Activated T-helper 1 cell treated with anti-CD3 and anti-CD28 coated beads, Interleukin-12 subunit alpha, Interleukin-12 subunit beta, Interleukin-2, Interleukin-4 antibody, amounts not matched to agents 30 ng/mL and 10 ng/mL and 1 ng/mL, durations not matched to agents 14 hours and 24 hours and 36 hours (primary cell): ENCODE measurements at regions of chr3 and their contacts with region 1.

Region 1: DNA sequence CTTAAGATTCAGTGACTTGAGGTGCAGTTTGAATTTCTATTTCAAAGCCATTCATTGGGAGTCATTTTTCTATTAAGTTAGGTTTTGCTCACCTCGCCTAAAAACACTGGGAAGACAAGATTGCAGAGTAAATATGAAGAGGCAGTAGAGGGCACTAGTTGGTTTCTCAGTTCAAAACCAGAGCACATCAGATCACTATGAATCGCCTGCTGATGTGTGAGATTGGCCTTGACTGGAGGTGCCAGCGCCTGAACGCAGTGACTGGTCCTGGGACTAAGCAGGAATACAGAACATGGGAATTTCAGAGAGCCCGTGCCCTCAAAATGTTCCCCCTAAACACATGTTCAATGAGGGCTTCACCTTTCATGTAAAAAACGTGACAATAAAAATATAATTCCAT is 229.0 kb downstream of the ITPR1 start:
- DNase-seq: no peak
- H3K4me3 Mint-ChIP-seq: no peak overlapping the region
- H3K27ac Mint-ChIP-seq: peak overlapping the region; percentile 90
- H3K4me1 Mint-ChIP-seq: peaks cover 78% of the 10 kb centered on the region
- H3K27me3 Mint-ChIP-seq: no peaks in the 10 kb centered on the region

Region 2: DNA sequence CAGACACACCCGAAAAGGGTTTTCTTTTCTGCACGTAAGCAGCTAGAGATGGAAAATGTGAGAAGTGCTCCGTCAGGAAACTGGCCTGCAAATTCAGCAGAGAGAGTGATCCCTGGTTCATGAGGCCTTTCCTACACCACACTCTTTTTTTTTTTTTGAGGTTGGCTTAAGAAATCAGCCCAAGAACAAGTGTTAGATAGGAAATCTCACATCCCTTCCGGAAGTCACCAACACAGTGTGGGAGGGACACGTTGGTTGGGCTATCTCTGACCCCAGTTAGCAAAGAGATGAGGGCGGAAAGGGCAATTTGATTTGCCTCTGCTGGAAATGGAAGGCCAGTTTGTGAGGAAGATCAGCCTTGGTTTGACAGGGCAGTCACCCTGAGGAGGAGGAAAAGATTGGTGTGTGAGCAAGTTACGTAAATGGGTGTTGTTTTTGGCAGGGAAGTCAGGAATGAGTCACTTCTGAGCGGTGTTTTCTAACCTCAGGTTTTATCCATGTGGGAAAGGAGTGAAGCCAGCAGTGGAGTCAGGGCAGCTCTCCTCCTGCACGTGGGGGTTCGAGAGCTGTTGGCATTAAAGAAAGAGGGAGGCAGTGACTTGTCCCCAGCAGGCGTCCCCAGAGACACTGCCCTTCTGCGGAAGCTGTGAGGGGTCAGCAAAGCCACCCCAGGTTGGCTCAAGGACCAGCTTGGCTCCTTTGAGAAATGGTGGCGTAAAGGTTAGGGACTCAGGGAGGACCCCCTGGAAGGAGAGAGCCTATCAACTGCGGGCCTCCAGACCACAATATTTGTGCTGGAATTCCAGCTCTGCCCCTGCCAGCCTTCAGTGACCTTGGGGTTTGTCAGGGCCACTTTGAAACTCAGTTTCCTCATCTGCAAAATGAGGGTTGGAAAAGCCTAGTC is 19.6 kb after region 1 on chr3:
- intact Hi-C with region 1: loop called (anchors 2 kb)
- DNase-seq: no peak
- H3K4me3 Mint-ChIP-seq: peak overlapping the region; percentile 74
- H3K27ac Mint-ChIP-seq: peak overlapping the region; percentile 89
- H3K4me1 Mint-ChIP-seq: peaks cover 79% of the 10 kb centered on the region
- H3K27me3 Mint-ChIP-seq: no peaks in the 10 kb centered on the region

Region 3: DNA sequence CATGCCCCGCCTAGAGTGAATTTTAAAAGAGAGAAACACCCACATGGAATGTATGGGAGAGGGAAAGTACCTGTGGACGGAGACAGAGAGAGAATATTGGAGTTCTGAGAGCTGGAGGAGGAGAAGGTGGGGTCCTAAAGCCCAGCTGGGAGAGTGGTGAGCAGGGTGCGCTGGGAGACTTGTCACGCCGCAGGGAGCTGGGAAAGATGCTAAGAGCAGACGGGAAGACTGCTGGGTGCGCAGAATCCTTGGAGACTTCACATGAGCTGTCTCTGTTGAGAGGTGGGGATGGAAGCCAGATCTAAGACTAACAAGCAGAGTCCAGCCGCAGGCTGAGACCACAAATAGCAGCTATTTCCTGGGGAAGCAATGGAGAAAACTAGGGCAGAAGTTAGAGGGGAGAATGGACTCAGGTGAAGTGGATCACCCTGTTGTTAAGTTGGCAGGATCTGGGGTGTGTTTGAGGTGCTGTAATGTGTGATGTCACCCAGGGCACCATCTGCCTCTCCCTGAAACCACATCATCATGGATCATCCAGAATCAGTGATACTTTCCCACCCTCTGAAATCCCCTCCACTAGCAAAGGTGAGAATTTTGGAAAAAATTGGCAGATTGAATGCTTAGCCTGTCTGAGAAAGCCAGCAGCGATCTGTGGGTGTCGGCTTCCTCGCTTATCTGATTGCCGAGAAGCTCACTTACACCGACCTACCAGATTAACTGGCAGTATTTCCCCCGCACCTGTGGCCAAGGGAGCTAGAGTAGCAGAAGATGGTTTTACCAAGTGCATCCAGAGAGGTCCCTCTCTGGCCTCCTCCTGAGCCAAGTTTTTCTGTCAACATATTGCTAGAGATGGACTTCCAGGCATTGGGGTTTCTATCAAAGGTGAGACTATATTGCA is 82.3 kb after region 1 on chr3:
- intact Hi-C with region 1: loop called (anchors 1 kb)
- DNase-seq: no peak
- H3K4me3 Mint-ChIP-seq: no peak overlapping the region
- H3K27ac Mint-ChIP-seq: peak overlapping the region; percentile 76
- H3K4me1 Mint-ChIP-seq: peaks cover 59% of the 10 kb centered on the region
- H3K27me3 Mint-ChIP-seq: no peaks in the 10 kb centered on the region

Region 4: GRCh38 chr3:4821975-4822374 is 99.9 kb after region 1 on chr3:
- intact Hi-C with region 1: loop called (anchors 2 kb)
- DNase-seq: peak; percentile 82
- H3K4me3 Mint-ChIP-seq: peak overlapping the region; percentile 86
- H3K27ac Mint-ChIP-seq: peak overlapping the region; percentile 100
- H3K4me1 Mint-ChIP-seq: peaks cover 98% of the 10 kb centered on the region
- H3K27me3 Mint-ChIP-seq: no peaks in the 10 kb centered on the region

Region 5: GRCh38 chr3:4928277-4928789 is 206.2 kb after region 1 on chr3:
- intact Hi-C with region 1: loop called (anchors 5 kb)
- DNase-seq: no peak
- H3K4me3 Mint-ChIP-seq: peak overlapping the region; percentile 20
- H3K27ac Mint-ChIP-seq: peak overlapping the region; percentile 79
- H3K4me1 Mint-ChIP-seq: peaks cover 60% of the 10 kb centered on the region
- H3K27me3 Mint-ChIP-seq: no peaks in the 10 kb centered on the region